ENCODE measurements at regions of chr5 and their contacts with region 1.

Region 1: DNA sequence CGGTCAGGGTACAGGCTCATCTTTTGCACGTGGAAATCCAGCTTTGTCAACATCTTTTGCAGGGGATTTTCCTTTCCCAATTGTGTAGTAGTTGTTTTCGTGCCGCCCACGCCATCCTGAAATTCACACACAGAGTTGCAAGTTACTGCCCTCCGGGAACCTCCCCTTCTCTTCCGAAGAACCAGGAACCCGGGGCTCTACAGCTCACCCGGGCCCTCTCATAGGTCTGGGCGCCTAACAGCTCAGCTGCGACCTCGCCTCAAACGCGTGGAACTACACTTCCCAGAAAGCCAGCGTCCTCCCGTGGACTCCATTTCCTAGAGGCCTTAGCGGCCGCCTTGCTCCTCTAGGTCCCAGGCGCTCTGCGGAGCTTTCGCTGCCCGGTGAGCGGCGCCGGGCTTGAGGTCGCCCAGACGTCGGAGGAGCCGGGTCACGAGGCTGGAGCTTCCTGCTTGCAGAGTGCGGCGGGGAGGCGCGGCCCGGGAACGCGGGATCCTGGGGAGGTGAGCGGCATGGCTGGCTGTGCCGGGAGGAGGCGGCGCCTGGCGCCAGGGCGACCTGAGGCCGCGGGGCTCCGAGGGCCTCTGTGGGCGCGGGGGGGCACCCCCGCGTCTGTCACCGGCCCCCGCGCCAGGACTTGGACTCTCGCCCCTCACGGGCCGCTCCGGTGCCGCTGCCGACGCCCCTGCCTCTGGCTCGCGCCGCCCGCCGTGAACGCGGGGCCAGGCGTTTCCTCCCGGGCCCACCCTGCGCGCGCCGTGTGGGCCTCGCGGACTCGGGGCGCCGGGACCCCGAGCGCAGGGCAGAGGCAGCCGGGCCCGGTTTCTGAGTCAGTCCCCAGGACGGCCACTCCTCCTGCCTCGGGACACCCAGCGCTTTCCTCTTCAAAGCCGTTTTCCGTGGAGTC is at the start of gene ZNF354B:
- DNase-seq: peak; percentile 93
- ATAC-seq: peak; percentile 100
- H3K4me3 Mint-ChIP-seq: peak within 1 kb of the TSS; percentile 79
- H3K27ac Mint-ChIP-seq: peak within 1 kb of the TSS; percentile 89
- H3K4me1 Mint-ChIP-seq: peaks cover 24% of the 10 kb centered on the region
- H3K27me3 Mint-ChIP-seq: no peaks in the 10 kb centered on the region
- total RNA-seq, gene ZNF354B: 10.8 to 11.9 TPM

Region 2: DNA sequence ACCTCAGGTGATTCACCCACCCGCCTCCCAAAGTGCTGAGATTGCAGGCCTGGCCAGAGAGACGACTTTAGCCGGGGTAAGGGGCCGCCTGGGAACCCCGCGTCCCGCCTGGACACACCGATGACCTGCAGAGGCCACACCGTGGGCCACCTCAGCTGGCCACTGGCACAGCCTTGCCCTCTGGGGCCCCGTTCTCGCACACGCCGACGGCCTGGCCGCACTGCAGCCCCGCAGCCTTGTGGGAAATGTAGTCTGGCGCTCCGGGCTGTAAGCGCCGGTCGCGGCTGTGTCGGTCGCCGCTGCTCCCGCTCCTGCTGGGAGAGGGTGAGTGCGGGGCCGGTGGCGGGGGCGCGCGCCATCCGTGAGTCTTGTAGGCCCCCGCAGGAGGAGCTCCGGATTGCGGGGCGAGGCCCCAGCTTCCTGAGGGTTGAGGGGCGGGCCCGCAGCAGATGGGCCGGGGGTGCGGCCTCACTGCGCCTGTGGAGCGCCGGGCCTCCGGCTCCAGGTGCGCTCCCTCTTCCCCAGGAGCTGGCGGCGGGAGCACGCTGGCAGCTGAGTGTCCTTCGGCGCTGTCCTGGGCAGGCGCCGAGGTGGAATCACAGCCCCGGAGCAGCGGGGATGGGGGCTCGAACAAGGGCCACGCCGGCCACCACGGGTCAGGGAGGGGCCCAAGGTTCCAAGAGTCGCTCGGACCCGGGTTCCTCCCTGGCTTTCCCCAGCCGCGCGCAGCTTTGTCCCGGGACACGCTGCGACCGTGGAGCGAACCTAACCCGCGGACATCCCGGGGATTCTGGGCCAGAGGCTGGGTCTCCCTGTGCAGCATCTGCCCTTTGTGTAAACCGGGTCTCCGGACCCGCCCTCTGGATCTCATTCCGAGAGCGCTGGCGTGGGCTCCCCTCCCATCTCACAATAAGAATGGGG is 36.0 kb after region 1 on chr5 and contains the start of gene ZFP2:
- CTCF ChIA-PET with region 1: no interaction called
- POLR2A ChIA-PET with region 1: no interaction called
- intact Hi-C with region 1: loop called (anchors 2 to 5 kb)
- DNase-seq: peak; percentile 63
- ATAC-seq: peak; percentile 97
- H3K4me3 Mint-ChIP-seq: peak within 1 kb of the TSS; percentile 69
- H3K27ac Mint-ChIP-seq: peak within 1 kb of the TSS; percentile 51
- H3K4me1 Mint-ChIP-seq: no peaks in the 10 kb centered on the region
- H3K27me3 Mint-ChIP-seq: no peaks in the 10 kb centered on the region
- total RNA-seq, gene ZFP2: 0.37 to 0.85 TPM

Region 3: DNA sequence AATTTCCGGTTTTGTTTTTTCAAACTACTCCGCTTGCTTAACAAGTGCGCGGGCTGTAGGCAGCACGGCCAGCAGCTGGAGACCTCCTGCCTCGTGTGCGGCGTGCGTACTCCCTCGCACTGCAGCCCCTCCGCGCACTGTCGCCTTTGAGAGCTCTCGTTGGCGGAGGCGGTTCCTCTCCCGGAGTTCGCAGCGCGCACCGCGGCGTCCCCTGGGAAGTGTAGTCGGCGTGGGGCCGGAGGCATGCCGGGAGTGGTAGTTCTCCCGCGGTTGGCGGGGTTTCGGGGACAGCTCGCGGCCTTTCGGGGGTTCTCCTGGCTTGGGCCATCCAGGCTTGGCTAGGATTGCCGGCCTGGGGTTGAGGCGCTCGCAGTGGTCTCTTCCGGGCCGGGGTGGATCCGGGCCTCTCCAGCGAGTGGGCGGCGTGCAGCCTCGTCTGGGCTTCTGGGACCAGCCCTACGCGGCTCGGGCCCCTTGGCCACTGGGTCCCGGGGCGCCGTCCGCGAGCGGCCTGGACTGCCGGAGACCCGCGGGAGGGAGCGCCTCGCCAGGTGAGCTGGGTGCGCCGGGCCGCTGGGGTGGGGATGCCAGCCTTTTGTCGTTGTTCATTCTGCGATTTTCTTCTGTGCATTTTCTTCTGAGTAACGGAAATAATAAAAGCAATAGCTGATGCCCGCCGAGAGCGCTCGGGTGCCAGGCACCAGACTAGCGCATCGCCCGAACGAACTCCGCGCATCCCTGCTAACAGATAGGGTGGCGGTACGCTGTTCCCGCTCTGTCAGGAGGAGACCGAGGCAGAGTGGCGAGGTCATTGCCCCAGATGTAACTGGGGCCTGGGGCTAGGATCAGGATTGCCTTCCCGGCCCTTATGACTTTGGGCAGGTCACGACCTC is 200.5 kb after region 1 on chr5 and contains the start of gene ZNF354C:
- CTCF ChIA-PET with region 1: no interaction called
- POLR2A ChIA-PET with region 1: interaction called, 10 read pairs
- intact Hi-C with region 1: loop called in 1 of 2 experiments (anchors 1 kb)
- DNase-seq: peak; percentile 93
- ATAC-seq: peak; percentile 99
- H3K4me3 Mint-ChIP-seq: peak within 1 kb of the TSS; percentile 81
- H3K27ac Mint-ChIP-seq: peak within 1 kb of the TSS; percentile 90
- H3K4me1 Mint-ChIP-seq: peaks cover 16% of the 10 kb centered on the region
- H3K27me3 Mint-ChIP-seq: no peaks in the 10 kb centered on the region
- total RNA-seq, gene ZNF354C: 7.1 to 7.2 TPM

Measured in activated CD4-positive, alpha-beta T cell treated with anti-CD3 and anti-CD28 coated beads for 36 hours (primary cell).